ENCODE measurements at regions of chr2 and their contacts with region 1.

Region 1: DNA sequence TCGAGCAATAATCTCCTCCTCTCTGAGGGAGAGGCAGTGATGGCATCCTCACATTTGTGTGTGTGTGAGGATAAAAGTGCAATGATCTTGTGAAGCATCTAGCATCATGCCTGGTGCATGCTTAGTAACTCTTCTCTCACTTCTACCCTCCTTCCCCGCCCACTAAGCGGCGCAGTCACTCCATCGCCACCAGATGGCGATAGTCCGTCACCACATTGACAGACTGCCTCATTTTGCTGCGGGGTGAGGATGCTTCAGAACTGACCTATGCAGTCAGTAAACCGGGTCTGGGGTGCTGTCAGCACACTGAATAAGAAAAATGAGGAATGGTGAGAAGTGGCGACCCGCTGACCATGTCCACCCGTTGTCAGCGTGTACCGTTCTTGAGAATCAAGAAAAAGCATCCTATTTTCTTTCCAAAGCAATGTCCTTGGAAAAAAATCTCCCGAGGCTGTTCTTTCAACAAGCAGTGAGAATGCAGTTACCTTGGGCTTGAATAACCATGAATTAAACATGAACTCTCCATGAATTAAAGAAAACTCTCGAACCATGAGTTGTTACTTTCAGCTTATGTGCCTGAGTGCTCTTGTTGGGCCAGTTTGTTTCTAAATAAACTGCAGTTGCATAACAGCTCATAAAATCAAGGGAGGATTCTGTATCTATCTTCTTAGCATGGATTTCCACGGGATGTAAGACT is 37.3 kb upstream of the TMEM177 start:
- DNase-seq: peak; percentile 73
- H3K4me3 ChIP-seq: no peak overlapping the region
- H3K27ac ChIP-seq: no peak overlapping the region
- H3K4me1 ChIP-seq: peaks cover 0 to 3% (median 0%) of the 10 kb centered on the region in 4 donors
- H3K27me3 ChIP-seq: no peaks in the 10 kb centered on the region
- CTCF ChIP-seq: peak; percentile 15 to 93 (median 74)
- EP300 ChIP-seq: no peak
- POLR2A ChIP-seq: no peak

Region 2: DNA sequence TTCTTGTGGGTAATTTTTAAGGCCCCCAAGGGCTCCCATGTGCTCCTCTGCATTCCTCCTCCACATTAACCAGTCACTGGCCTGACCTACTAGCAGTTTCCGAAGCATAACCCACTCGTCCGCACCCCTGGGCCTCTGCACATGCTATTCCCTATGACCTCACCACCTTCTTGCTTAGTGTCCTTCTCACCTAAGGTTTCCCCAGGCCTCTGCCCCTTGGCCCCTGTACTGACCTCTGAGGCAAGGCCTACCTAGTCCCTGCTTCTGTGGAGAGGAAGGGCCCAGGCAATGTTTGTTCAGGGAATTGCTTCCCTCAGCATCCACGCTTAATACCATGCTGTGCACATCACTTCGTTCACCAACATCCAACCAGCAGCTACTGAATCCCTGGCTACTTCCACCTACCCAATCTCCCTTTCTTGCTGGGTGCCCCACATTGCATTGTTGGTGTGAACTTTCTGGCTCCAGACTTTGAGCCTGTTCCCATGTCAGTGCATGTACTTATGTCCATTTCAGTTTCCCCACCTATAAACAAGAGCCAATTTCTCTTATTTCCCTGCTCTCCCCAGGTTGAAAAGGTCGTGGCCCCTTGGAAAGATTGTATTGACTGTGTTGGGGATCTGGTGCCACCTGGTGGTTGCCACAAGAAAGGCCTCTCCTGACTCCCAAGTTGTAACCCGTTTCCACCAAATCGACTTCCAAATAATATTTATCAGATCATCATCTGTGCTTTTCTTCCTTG is 18.1 kb after region 1 on chr2:
- intact Hi-C with region 1: loop called (anchors 2 kb)
- DNase-seq: no peak
- H3K4me3 ChIP-seq: no peak overlapping the region
- H3K27ac ChIP-seq: no peak overlapping the region
- H3K4me1 ChIP-seq: no peaks in the 10 kb centered on the region
- H3K27me3 ChIP-seq: peaks cover 0 to 3% (median 0%) of the 10 kb centered on the region in 3 donors
- CTCF ChIP-seq: peak; percentile 10 to 85 (median 66)
- EP300 ChIP-seq: no peak
- POLR2A ChIP-seq: no peak

Measured in sigmoid colon (tissue), 7 donors.